CD8-positive, alpha-beta T cell (primary cell): ENCODE measurements at regions of chr2 and their contacts with region 1.

Region 1: DNA sequence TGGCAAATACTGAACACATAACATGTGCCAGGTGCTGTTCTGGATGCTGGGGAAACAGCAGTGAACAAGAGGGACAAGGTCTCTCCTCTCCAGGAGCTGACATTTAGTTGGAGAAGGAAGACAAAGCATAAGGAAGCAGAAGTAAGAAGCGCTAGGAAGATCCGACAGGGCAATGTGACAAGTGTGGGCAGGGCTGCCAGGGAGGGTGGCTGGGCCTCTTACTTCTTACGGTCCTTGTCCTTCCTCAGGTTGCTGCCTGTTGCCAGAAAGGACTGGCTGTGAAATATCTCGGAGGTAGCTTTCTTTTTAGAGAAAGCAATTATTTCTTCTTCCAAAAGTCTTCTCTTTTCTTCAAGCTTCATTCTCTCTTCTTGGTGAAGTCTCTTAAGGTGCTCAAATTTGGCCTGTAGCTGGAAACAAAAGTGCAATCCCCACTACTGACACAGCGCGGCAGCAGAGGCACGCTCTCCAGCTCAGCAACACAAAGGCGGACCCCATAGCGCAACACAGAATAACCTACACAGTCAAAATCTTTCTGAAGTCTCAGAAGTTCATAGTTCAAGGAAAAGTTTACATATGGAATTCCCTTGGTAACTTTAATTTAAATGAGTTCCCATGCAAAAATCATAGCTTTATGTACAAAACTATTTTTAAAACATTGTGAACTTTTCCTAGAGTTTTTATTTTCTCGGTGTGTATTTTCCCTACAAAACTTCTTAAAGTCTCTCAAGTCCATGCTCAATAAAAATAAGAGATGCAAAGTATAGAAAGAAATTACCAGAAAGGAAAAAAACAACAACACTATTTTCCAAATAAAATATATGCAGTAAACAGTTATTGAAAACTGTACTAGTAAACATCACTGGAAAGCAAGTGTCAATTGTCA is 67.7 kb downstream of the SEPTIN10 start:
- DNase-seq: peak; percentile 24 to 71 (median 51)
- ATAC-seq: peak; percentile 92
- H3K4me3 ChIP-seq: no peak overlapping the region
- H3K4me3 Mint-ChIP-seq: no peak overlapping the region
- H3K27ac ChIP-seq: no peak overlapping the region
- H3K27ac Mint-ChIP-seq: no peak overlapping the region
- H3K4me1 ChIP-seq: no peaks in the 10 kb centered on the region
- H3K4me1 Mint-ChIP-seq: no peaks in the 10 kb centered on the region
- H3K27me3 ChIP-seq: no peaks in the 10 kb centered on the region
- H3K27me3 Mint-ChIP-seq: peaks cover 12% of the 10 kb centered on the region
- CTCF ChIP-seq: peak; percentile 84

Region 2: GRCh38 chr2:109615603-109616583 is 69.8 kb after region 1 on chr2:
- CTCF ChIA-PET with region 1: no interaction called
- POLR2A ChIA-PET with region 1: no interaction called
- intact Hi-C with region 1: no loop called
- DNase-seq: no peak
- ATAC-seq: no peak
- H3K4me3 ChIP-seq: no peak overlapping the region
- H3K4me3 Mint-ChIP-seq: peak overlapping the region; percentile 29
- H3K27ac ChIP-seq: no peak overlapping the region
- H3K27ac Mint-ChIP-seq: no peak overlapping the region
- H3K4me1 ChIP-seq: peaks cover 3% of the 10 kb centered on the region
- H3K4me1 Mint-ChIP-seq: peaks cover 13% of the 10 kb centered on the region
- H3K27me3 ChIP-seq: peaks cover 26 to 34% of the 10 kb centered on the region in 2 experiments
- H3K27me3 Mint-ChIP-seq: peaks cover 56% of the 10 kb centered on the region
- CTCF ChIP-seq: no peak

Region 3: DNA sequence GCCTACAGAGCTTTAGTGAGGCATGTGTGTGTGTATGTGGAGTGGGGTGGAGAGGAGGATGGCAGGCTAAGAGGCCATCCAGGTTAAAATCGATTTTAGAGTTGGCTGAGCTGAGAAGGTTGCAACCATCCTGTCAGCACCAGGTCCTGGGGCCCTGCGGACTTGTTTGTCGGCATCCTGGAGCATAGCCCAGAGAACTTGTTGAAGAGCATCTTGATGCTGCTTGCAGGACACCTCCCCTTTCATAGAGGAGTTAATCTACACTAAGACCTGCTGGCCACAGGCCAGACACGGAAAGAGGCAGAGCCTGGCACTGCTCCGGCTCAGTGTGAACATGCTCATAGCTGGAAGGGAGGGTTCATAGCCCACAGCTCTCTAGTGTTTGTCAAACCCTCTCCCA is 176.0 kb after region 1 on chr2:
- CTCF ChIA-PET with region 1: no interaction called
- POLR2A ChIA-PET with region 1: no interaction called
- intact Hi-C with region 1: loop called in 1 of 2 experiments (anchors 10 kb)
- DNase-seq: peak in 1 of 9 experiments; percentile 37
- ATAC-seq: no peak
- H3K4me3 ChIP-seq: no peak overlapping the region
- H3K4me3 Mint-ChIP-seq: no peak overlapping the region
- H3K27ac ChIP-seq: no peak overlapping the region
- H3K27ac Mint-ChIP-seq: no peak overlapping the region
- H3K4me1 ChIP-seq: no peaks in the 10 kb centered on the region
- H3K4me1 Mint-ChIP-seq: no peaks in the 10 kb centered on the region
- H3K27me3 ChIP-seq: no peaks in the 10 kb centered on the region
- H3K27me3 Mint-ChIP-seq: peaks cover 12% of the 10 kb centered on the region
- CTCF ChIP-seq: no peak